ENCODE measurements at regions of chr11 and their contacts with region 1.

Region 1: GRCh38 chr11:34565417-34566207 is 52.0 kb upstream of the ELF5 start:
- DNase-seq: peak in 1 of 2 experiments; percentile 16
- H3K4me3 ChIP-seq: no peak overlapping the region
- H3K4me3 Mint-ChIP-seq: no peak overlapping the region
- H3K27ac Mint-ChIP-seq: no peak overlapping the region
- H3K4me1 ChIP-seq: peaks cover 15% of the 10 kb centered on the region
- H3K4me1 Mint-ChIP-seq: peaks cover 12% of the 10 kb centered on the region
- H3K27me3 ChIP-seq: no peaks in the 10 kb centered on the region
- H3K27me3 Mint-ChIP-seq: no peaks in the 10 kb centered on the region
- CTCF ChIP-seq: peak in 1 of 2 experiments; percentile 54

Region 2: DNA sequence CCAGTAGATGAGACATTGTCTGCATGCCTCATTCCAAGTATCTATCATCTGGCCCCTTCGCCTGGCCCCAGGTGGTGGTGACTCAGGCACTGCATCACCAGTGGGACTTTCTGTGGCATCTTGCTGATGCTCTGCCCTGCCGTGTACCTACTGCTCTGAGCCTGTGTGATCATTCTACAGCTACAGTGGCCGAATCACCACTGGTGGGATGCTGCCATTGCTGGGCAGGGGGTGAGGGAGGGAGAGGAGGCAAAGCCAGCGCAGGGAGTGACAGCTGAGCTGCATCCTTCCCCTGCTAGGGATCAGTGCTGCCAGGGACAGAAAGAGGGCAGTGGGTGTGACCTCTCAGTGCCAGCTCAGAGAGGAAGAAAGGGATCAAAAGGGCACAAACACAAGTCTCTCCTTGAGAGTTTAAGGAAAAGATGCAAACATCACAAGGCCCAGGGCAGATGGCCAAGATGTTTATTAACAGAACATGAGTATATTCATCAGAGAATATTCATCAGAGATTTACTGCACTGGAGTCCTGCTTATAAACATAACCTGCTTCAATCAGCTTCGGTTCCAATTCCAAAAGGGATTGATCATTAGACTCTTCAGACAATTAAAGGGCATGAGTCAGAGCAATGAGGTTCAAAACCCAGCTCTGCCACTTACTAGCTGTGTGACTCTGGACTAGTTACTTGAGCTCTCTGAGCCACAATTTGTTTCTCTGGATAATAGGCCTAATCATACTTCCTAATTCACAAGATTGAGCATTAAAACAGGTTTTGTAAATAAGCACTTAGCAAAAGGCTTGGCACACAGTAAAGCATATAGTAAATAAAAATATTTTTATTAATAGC is 350.4 kb before region 1 on chr11:
- CTCF ChIA-PET with region 1: no interaction called
- POLR2A ChIA-PET with region 1: no interaction called
- intact Hi-C with region 1: no loop called
- DNase-seq: no peak
- H3K4me3 ChIP-seq: no peak overlapping the region
- H3K4me3 Mint-ChIP-seq: no peak overlapping the region
- H3K27ac Mint-ChIP-seq: no peak overlapping the region
- H3K4me1 ChIP-seq: no peaks in the 10 kb centered on the region
- H3K4me1 Mint-ChIP-seq: no peaks in the 10 kb centered on the region
- H3K27me3 ChIP-seq: no peaks in the 10 kb centered on the region; the same call in none of the 2 replicates
- H3K27me3 Mint-ChIP-seq: no peaks in the 10 kb centered on the region
- CTCF ChIP-seq: no peak

Region 3: GRCh38 chr11:34512840-34513681 is 52.6 kb before region 1 on chr11:
- CTCF ChIA-PET with region 1: interaction called, 11 read pairs
- POLR2A ChIA-PET with region 1: no interaction called
- intact Hi-C with region 1: no loop called
- DNase-seq: peak; percentile 67 to 75
- H3K4me3 ChIP-seq: no peak overlapping the region
- H3K4me3 Mint-ChIP-seq: peak overlapping the region; percentile 9
- H3K27ac Mint-ChIP-seq: no peak overlapping the region
- H3K4me1 ChIP-seq: peaks cover 17% of the 10 kb centered on the region
- H3K4me1 Mint-ChIP-seq: peaks cover 11% of the 10 kb centered on the region
- H3K27me3 ChIP-seq: no peaks in the 10 kb centered on the region
- H3K27me3 Mint-ChIP-seq: peaks cover 1% of the 10 kb centered on the region
- CTCF ChIP-seq: peak; percentile 78 to 92

Region 4: GRCh38 chr11:34546511-34547222 is 18.9 kb before region 1 on chr11:
- CTCF ChIA-PET with region 1: no interaction called
- POLR2A ChIA-PET with region 1: no interaction called
- intact Hi-C with region 1: no loop called
- DNase-seq: no peak
- H3K4me3 ChIP-seq: no peak overlapping the region
- H3K4me3 Mint-ChIP-seq: no peak overlapping the region
- H3K27ac Mint-ChIP-seq: no peak overlapping the region
- H3K4me1 ChIP-seq: no peaks in the 10 kb centered on the region
- H3K4me1 Mint-ChIP-seq: no peaks in the 10 kb centered on the region
- H3K27me3 ChIP-seq: no peaks in the 10 kb centered on the region; the same call in 1 of the 2 replicates
- H3K27me3 Mint-ChIP-seq: peaks cover 9% of the 10 kb centered on the region
- CTCF ChIP-seq: no peak

Region 5: GRCh38 chr11:34599406-34599901 is 33.8 kb after region 1 on chr11:
- CTCF ChIA-PET with region 1: no interaction called
- POLR2A ChIA-PET with region 1: no interaction called
- intact Hi-C with region 1: no loop called
- DNase-seq: peak; percentile 52 to 73
- H3K4me3 ChIP-seq: no peak overlapping the region
- H3K4me3 Mint-ChIP-seq: peak overlapping the region; percentile 71
- H3K27ac Mint-ChIP-seq: peak overlapping the region; percentile 91
- H3K4me1 ChIP-seq: peaks cover 53% of the 10 kb centered on the region
- H3K4me1 Mint-ChIP-seq: peaks cover 40% of the 10 kb centered on the region
- H3K27me3 ChIP-seq: no peaks in the 10 kb centered on the region
- H3K27me3 Mint-ChIP-seq: no peaks in the 10 kb centered on the region
- CTCF ChIP-seq: no peak

Region 6: DNA sequence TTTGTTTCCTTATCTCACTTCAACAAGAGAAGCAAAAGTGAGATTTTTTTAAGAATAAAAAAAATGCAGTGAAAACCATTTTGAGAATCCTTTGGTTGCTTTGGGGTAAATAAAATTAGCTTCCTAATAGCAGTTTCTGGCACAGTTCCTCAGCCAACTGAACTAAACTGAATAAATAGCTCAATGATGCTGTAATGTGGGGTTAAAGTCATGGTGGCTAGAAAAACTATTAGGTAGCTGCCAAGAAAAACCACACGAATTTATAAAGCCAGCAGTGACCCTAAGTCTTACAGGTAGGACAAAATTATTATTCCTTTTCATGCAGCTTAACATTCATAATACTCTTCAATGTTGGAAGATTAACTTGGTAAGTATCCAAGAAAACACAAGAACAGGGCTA is 208.2 kb after region 1 on chr11:
- CTCF ChIA-PET with region 1: no interaction called
- POLR2A ChIA-PET with region 1: no interaction called
- intact Hi-C with region 1: no loop called
- DNase-seq: no peak
- H3K4me3 ChIP-seq: no peak overlapping the region
- H3K4me3 Mint-ChIP-seq: no peak overlapping the region
- H3K27ac Mint-ChIP-seq: no peak overlapping the region
- H3K4me1 ChIP-seq: no peaks in the 10 kb centered on the region
- H3K4me1 Mint-ChIP-seq: no peaks in the 10 kb centered on the region
- H3K27me3 ChIP-seq: no peaks in the 10 kb centered on the region
- H3K27me3 Mint-ChIP-seq: peaks cover 5% of the 10 kb centered on the region
- CTCF ChIP-seq: no peak